Right cardiac atrium (tissue), 5 donors: ENCODE measurements at regions of chr5 and their contacts with region 1.

Region 1: DNA sequence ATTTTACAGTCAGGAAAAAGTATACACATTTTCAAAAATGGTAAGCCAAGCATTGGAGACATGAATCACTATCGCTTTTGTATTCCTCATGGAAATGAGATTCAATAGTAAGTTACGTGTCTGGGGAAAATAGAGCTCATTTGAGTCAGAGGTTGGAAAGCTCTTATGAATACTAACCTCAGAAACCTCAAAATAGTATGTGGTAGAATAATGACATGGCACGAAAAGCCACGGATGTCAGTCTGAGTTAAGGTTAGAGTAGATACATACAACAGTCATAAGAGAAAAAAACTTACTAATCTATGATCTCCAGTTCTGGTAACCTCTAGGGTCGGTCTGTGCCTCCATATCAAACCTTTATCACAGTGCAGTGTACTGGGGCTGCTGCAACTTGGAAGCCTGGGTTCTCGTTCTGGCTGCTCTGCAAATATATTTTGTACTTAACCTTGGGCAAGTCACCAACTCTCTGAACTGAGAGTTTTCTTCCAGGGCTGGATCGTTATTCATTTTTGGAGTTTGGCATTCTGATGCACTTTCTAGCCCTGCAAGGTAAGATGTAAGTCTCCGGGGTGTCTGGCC is 31.8 kb downstream of the MAP1B start:
- DNase-seq: no peak
- ATAC-seq: peak; percentile 33 to 60
- H3K4me3 ChIP-seq: no peak overlapping the region
- H3K27ac ChIP-seq: peak overlapping the region; percentile 57
- H3K4me1 ChIP-seq: peaks cover 13% of the 10 kb centered on the region
- H3K27me3 ChIP-seq: no peaks in the 10 kb centered on the region

Region 2: DNA sequence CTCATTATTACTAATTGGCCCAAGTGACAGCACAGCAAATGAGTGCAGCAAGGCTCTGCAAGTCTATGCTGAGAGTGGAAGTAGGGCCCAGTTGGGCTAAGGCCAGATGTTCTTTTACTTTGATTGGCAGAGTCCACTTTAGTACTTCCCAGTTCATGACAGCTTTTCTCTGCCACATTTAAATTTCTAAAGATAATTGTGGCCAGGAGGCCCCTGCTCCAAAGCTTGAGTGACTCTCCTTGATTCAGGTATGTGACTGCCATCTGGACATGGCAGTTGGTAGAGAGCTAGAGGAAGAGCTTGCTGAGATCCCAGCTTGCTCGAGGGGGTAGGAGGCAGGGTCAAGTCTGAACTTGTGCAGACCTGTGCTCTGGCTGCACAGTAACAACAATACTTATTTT is 265.8 kb before region 1 on chr5:
- intact Hi-C with region 1: no loop called
- DNase-seq: no peak
- ATAC-seq: peak in 1 of 2 donors; percentile 31
- H3K4me3 ChIP-seq: no peak overlapping the region
- H3K27ac ChIP-seq: no peak overlapping the region
- H3K4me1 ChIP-seq: no peaks in the 10 kb centered on the region
- H3K27me3 ChIP-seq: no peaks in the 10 kb centered on the region

Region 3: GRCh38 chr5:72307968-72308852 is 169.2 kb after region 1 on chr5:
- intact Hi-C with region 1: loop called in 2 of 4 experiments (anchors 10 kb)
- DNase-seq: peak; percentile 99
- ATAC-seq: peak; percentile 99
- H3K4me3 ChIP-seq: peak overlapping the region; percentile 45
- H3K27ac ChIP-seq: peak overlapping the region; percentile 82
- H3K4me1 ChIP-seq: no peaks in the 10 kb centered on the region
- H3K27me3 ChIP-seq: no peaks in the 10 kb centered on the region